Heart right ventricle (tissue), 16 donors: ENCODE measurements at regions of chr12 and their contacts with region 1.

Region 1: GRCh38 chr12:9925708-9926393 is 6.3 kb downstream of the CLEC2A start:
- DNase-seq: peak in 1 of 2 donors; percentile 8
- ATAC-seq: peak in 5 of 8 donors; percentile 49 to 69 (median 56)
- H3K4me3 ChIP-seq: peak overlapping the region in 6 of 10 donors; percentile 8 to 37 (median 20)
- H3K27ac ChIP-seq: no peak overlapping the region
- H3K4me1 ChIP-seq: peaks cover 0 to 8% (median 0%) of the 10 kb centered on the region in 9 donors
- H3K27me3 ChIP-seq: peaks cover 0 to 3% (median 0%) of the 10 kb centered on the region in 7 donors
- CTCF ChIP-seq: peak in 7 of 9 donors; percentile 50 to 69 (median 60)

Region 2: DNA sequence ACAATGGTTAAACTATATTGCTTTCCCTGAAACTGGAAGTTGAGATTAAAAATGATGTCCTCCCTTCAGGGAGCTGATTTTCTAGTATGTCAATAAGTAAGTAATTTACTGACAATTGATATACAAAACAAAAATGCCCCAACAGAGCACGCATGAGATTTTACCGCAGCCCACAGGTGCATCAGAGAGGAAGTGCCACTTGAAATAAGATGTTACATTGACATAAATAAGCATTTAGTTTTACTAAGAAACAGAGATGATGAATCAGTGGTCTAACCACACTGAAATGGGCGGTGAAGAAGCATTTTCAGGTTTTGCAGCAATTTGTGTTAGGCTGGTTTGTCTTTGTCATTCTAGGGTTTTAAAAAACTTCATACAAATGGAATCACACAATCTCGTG is 184.1 kb before region 1 on chr12:
- intact Hi-C with region 1: loop called in 1 of 10 experiments (anchors 5 kb)
- DNase-seq: no peak
- ATAC-seq: no peak
- H3K4me3 ChIP-seq: no peak overlapping the region
- H3K27ac ChIP-seq: peak overlapping the region in 1 of 10 donors; percentile 79
- H3K4me1 ChIP-seq: peaks cover 0 to 47% (median 17%) of the 10 kb centered on the region in 9 donors
- H3K27me3 ChIP-seq: peaks cover 0 to 4% (median 0%) of the 10 kb centered on the region in 7 donors
- CTCF ChIP-seq: no peak

Region 3: GRCh38 chr12:9750276-9751203 is 175.3 kb before region 1 on chr12:
- intact Hi-C with region 1: loop called in 9 of 10 experiments (anchors 2 to 5 kb)
- DNase-seq: peak in 1 of 2 donors; percentile 48
- ATAC-seq: peak in 7 of 8 donors; percentile 71 to 92 (median 78)
- H3K4me3 ChIP-seq: peak overlapping the region in 6 of 10 donors; percentile 6 to 29 (median 19)
- H3K27ac ChIP-seq: no peak overlapping the region
- H3K4me1 ChIP-seq: peaks cover 0 to 14% (median 0%) of the 10 kb centered on the region in 9 donors
- H3K27me3 ChIP-seq: no peaks in the 10 kb centered on the region
- CTCF ChIP-seq: peak; percentile 68 to 91 (median 84)

Region 4: GRCh38 chr12:9813821-9814809 is 111.7 kb before region 1 on chr12:
- intact Hi-C with region 1: loop called in 8 of 10 experiments (anchors 1 to 10 kb)
- DNase-seq: peak; percentile 72 to 79
- ATAC-seq: peak; percentile 80 to 95 (median 90)
- H3K4me3 ChIP-seq: peak overlapping the region in 7 of 10 donors; percentile 19 to 50 (median 41)
- H3K27ac ChIP-seq: no peak overlapping the region
- H3K4me1 ChIP-seq: peaks cover 0 to 17% (median 0%) of the 10 kb centered on the region in 9 donors
- H3K27me3 ChIP-seq: peaks cover 0 to 11% (median 0%) of the 10 kb centered on the region in 7 donors
- CTCF ChIP-seq: peak; percentile 55 to 79 (median 71)